Activated CD4-positive, alpha-beta T cell treated with anti-CD3 and anti-CD28 coated beads, Interleukin-2, amount 10 ng/mL, durations not matched to agents 7 days and 5 days (primary cell): ENCODE measurements at regions of chr6 and their contacts with region 1.

Region 1: GRCh38 chr6:34745277-34746103 is 11.8 kb upstream of the SNRPC start:
- DNase-seq: no peak
- H3K4me3 Mint-ChIP-seq: no peak overlapping the region
- H3K27ac Mint-ChIP-seq: no peak overlapping the region
- H3K4me1 Mint-ChIP-seq: no peaks in the 10 kb centered on the region
- H3K27me3 Mint-ChIP-seq: no peaks in the 10 kb centered on the region

Region 2: GRCh38 chr6:34717466-34717865 is 28.0 kb before region 1 on chr6:
- CTCF ChIA-PET with region 1: no interaction called
- POLR2A ChIA-PET with region 1: no interaction called
- DNase-seq: no peak
- H3K4me3 Mint-ChIP-seq: no peak overlapping the region
- H3K27ac Mint-ChIP-seq: no peak overlapping the region
- H3K4me1 Mint-ChIP-seq: no peaks in the 10 kb centered on the region
- H3K27me3 Mint-ChIP-seq: peaks cover 6% of the 10 kb centered on the region

Region 3: GRCh38 chr6:34757687-34758274 is 12.3 kb after region 1 on chr6:
- CTCF ChIA-PET with region 1: interaction called, 14 read pairs
- POLR2A ChIA-PET with region 1: no interaction called
- DNase-seq: no peak
- H3K4me3 Mint-ChIP-seq: no peak overlapping the region
- H3K27ac Mint-ChIP-seq: no peak overlapping the region
- H3K4me1 Mint-ChIP-seq: peaks cover 8% of the 10 kb centered on the region
- H3K27me3 Mint-ChIP-seq: no peaks in the 10 kb centered on the region